A673 (cell line): ENCODE measurements at regions of chr14 and their contacts with region 1.

Region 1: GRCh38 chr14:103546652-103547454 is 15.6 kb downstream of the BAG5 start:
- DNase-seq: peak; percentile 64
- H3K4me3 ChIP-seq: no peak overlapping the region
- H3K27ac ChIP-seq: no peak overlapping the region
- H3K4me1 ChIP-seq: peaks cover 30% of the 10 kb centered on the region
- H3K27me3 ChIP-seq: no peaks in the 10 kb centered on the region
- CTCF ChIP-seq: peak; percentile 99

Region 2: GRCh38 chr14:103104654-103105452 is 442.0 kb before region 1 on chr14:
- CTCF ChIA-PET with region 1: no interaction called
- POLR2A ChIA-PET with region 1: no interaction called
- intact Hi-C with region 1: no loop called
- DNase-seq: peak; percentile 64
- H3K4me3 ChIP-seq: no peak overlapping the region
- H3K27ac ChIP-seq: no peak overlapping the region
- H3K4me1 ChIP-seq: peaks cover 12% of the 10 kb centered on the region
- H3K27me3 ChIP-seq: peaks cover 30% of the 10 kb centered on the region
- CTCF ChIP-seq: peak; percentile 100

Region 3: GRCh38 chr14:103500148-103500990 is 46.5 kb before region 1 on chr14:
- CTCF ChIA-PET with region 1: interaction called, 6 read pairs
- POLR2A ChIA-PET with region 1: no interaction called
- intact Hi-C with region 1: loop called (anchors 5 kb)
- DNase-seq: peak; percentile 85
- H3K4me3 ChIP-seq: no peak overlapping the region
- H3K27ac ChIP-seq: peak overlapping the region; percentile 21
- H3K4me1 ChIP-seq: no peaks in the 10 kb centered on the region
- H3K27me3 ChIP-seq: no peaks in the 10 kb centered on the region
- CTCF ChIP-seq: peak; percentile 98

Region 4: GRCh38 chr14:103518422-103519042 is 28.3 kb before region 1 on chr14:
- CTCF ChIA-PET with region 1: interaction called, 8 read pairs
- POLR2A ChIA-PET with region 1: no interaction called
- intact Hi-C with region 1: loop called (anchors 1 kb)
- DNase-seq: peak; percentile 67
- H3K4me3 ChIP-seq: no peak overlapping the region
- H3K27ac ChIP-seq: peak overlapping the region; percentile 42
- H3K4me1 ChIP-seq: peaks cover 18% of the 10 kb centered on the region
- H3K27me3 ChIP-seq: no peaks in the 10 kb centered on the region
- CTCF ChIP-seq: peak; percentile 95

Region 5: GRCh38 chr14:104554608-104555429 is 1008.0 kb after region 1 on chr14:
- CTCF ChIA-PET with region 1: no interaction called
- POLR2A ChIA-PET with region 1: no interaction called
- intact Hi-C with region 1: no loop called
- DNase-seq: no peak
- H3K4me3 ChIP-seq: no peak overlapping the region
- H3K27ac ChIP-seq: no peak overlapping the region
- H3K4me1 ChIP-seq: no peaks in the 10 kb centered on the region
- H3K27me3 ChIP-seq: no peaks in the 10 kb centered on the region
- CTCF ChIP-seq: no peak